Aorta (tissue), 5 donors: ENCODE measurements at regions of chr13 and their contacts with region 1.

Region 1: GRCh38 chr13:20049558-20050473 is 91.3 kb downstream of the ZMYM2 start:
- DNase-seq: no peak
- ATAC-seq: no peak
- H3K4me3 ChIP-seq: no peak overlapping the region
- H3K27ac ChIP-seq: no peak overlapping the region
- H3K4me1 ChIP-seq: no peaks in the 10 kb centered on the region
- H3K27me3 ChIP-seq: no peaks in the 10 kb centered on the region

Region 2: GRCh38 chr13:19984430-19985218 is 65.2 kb before region 1 on chr13:
- intact Hi-C with region 1: loop called in 1 of 2 experiments (anchors 10 kb)
- DNase-seq: no peak
- ATAC-seq: no peak
- H3K4me3 ChIP-seq: no peak overlapping the region
- H3K27ac ChIP-seq: no peak overlapping the region
- H3K4me1 ChIP-seq: peaks cover 0 to 2% of the 10 kb centered on the region in 2 donors
- H3K27me3 ChIP-seq: no peaks in the 10 kb centered on the region

Region 3: GRCh38 chr13:20441879-20442278 is 392.1 kb after region 1 on chr13:
- intact Hi-C with region 1: no loop called
- DNase-seq: no peak
- ATAC-seq: no peak
- H3K4me3 ChIP-seq: no peak overlapping the region
- H3K27ac ChIP-seq: no peak overlapping the region
- H3K4me1 ChIP-seq: no peaks in the 10 kb centered on the region
- H3K27me3 ChIP-seq: no peaks in the 10 kb centered on the region